Dendritic cell treated with granulocyte-macrophage colony-stimulating factor and Interleukin-4, amounts not matched to agents 40 ng/mL and 50 ng/mL, for 4 days (primary cell): ENCODE measurements at regions of chr5 and their contacts with region 1.

Region 1: DNA sequence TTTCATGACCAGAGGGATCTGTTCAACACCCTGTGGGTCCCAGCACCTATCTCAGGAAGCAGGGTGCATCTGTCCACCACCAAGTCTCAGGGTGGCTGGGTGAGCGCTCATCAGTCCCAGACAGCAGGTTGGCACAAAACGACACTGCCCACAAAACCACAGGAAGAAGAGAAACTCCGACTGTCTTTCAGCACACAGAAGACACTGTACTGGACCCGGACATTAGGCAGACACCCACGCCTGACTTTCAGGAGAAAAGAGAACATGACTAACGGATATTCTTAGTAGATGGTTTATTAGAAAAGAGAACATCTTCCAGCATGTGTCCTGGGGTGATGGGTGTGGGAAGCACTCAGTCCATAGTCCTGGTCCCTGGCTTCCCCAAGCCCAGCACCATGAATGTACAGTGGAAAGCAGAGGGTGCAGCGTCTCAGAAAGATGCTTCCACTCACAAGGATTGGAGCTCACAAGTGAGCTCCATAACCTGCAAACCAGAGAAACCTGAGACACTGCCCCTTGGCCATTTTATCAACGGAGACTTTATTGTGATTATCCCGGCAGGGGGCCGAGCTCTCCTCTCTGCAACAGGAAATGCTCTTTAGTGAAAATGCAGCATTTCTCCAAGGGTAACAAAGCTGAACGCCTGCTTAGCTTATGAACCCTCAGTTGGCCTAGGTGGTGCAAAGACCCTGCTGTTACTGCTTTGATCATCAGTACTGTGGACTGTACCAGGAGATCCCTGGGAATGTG is 35.8 kb upstream of the LCP2 start:
- H3K4me3 Mint-ChIP-seq: peak overlapping the region; percentile 44
- H3K27ac Mint-ChIP-seq: no peak overlapping the region
- H3K4me1 Mint-ChIP-seq: no peaks in the 10 kb centered on the region
- H3K27me3 Mint-ChIP-seq: peaks cover 2% of the 10 kb centered on the region

Region 2: GRCh38 chr5:170067152-170067551 is 266.2 kb before region 1 on chr5:
- intact Hi-C with region 1: no loop called
- H3K4me3 Mint-ChIP-seq: no peak overlapping the region
- H3K27ac Mint-ChIP-seq: no peak overlapping the region
- H3K4me1 Mint-ChIP-seq: no peaks in the 10 kb centered on the region
- H3K27me3 Mint-ChIP-seq: no peaks in the 10 kb centered on the region

Region 3: DNA sequence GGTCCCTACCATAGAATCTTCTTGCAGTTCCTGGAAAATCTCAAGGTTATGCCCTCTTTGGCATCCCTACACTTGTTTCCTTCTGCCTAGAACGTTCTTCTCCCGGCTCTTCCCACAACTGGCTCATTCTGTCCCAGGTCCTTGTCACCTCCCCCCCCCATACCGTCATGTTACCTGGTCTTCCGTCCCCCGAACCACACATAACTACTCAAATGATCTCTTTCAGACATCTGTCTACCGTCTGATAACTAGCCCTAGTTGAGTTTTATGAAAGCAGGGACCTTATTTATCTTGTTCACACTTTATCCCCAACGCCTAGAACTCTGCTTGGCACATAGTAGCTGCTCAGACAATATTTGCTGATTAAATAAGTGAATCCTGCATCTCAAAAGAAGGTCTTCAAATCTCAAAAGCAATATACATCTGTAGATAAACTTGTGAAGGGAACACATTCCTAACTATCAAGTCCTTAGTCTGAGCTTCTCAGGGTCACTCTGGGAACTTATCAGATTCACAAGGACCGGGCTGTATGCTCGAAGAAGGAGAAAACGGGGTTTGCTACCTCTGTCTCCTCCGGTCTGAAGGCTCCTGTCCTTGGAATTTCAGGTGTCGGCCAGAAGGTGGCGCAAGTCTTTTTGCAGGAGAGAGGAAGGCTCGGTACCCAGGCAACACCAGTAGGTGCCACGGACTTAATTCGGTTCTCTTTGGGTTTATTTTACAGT is 65.7 kb before region 1 on chr5:
- intact Hi-C with region 1: loop called (anchors 1 kb)
- H3K4me3 Mint-ChIP-seq: no peak overlapping the region
- H3K27ac Mint-ChIP-seq: peak overlapping the region; percentile 20
- H3K4me1 Mint-ChIP-seq: peaks cover 63% of the 10 kb centered on the region
- H3K27me3 Mint-ChIP-seq: no peaks in the 10 kb centered on the region

Region 4: DNA sequence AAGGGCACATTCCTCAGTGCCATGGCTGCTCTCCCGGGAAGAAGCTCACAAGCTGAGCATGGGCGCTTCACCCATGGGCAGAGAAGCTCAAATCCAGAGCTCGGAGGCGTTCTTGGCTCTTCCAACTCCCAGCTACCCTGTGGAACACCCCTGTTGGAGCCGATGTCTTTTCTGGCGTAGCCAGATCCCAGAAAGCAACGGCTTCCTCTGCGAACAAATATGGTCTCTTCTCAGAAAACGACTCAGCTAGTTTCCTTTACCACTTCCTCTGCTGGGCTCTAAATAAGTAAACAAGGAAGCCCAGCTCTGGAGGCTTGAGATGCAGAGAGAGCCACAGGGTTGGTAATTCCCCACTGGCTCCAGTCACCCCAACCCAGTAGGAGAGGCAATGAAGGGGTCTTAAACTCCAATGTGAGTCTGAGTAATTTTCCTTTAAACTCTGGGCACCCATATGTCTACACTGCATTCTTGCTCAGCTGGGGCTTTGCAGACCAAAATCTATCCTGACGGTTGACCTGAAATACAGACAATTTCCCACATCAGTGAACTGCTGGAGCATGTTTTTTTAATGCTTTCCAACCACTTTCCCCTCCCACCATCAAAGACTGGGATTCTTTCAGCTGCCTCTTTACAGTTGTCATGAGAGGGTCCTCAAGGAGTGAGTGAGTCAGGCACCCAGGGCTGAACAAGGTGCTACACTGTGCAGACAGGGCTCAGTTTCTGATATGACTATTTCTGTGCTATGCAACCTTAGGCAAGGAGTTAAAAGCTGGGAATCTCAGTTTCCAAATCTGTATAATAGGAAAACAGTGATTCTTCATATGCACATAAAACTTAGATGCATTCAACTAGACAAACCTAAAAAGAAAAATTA is 35.5 kb before region 1 on chr5 and contains the start of gene LCP2:
- intact Hi-C with region 1: loop called (anchors 5 kb)
- H3K4me3 Mint-ChIP-seq: peak within 1 kb of the TSS; percentile 99
- H3K27ac Mint-ChIP-seq: peak within 1 kb of the TSS; percentile 95
- H3K4me1 Mint-ChIP-seq: peaks cover 82% of the 10 kb centered on the region
- H3K27me3 Mint-ChIP-seq: no peaks in the 10 kb centered on the region

Region 5: GRCh38 chr5:170312666-170313065 is 20.7 kb before region 1 on chr5:
- intact Hi-C with region 1: loop called (anchors 1 kb)
- H3K4me3 Mint-ChIP-seq: peak overlapping the region; percentile 37
- H3K27ac Mint-ChIP-seq: peak overlapping the region; percentile 88
- H3K4me1 Mint-ChIP-seq: peaks cover 77% of the 10 kb centered on the region
- H3K27me3 Mint-ChIP-seq: peaks cover 1% of the 10 kb centered on the region

Region 6: DNA sequence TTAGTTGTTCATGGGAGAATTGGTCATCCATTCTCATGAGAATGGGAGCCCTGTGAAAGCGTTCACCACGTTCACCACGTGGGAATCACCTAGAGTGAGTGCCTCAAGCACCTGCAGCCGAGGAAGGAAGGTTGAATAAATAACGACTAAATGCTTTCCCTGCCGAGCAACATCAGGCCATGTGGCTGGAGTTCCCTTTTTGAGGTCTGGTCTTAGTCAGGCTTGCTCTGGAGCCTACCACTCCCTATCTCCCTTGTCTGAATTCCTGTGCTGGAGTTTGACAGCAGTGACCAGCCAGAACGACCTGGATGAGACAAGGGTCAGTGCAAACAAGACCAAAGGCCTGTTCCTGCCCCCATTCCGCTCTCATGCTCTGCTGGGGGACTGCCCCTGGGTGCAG is 27.4 kb after region 1 on chr5:
- intact Hi-C with region 1: loop called (anchors 2 kb)
- H3K4me3 Mint-ChIP-seq: no peak overlapping the region
- H3K27ac Mint-ChIP-seq: peak overlapping the region; percentile 98
- H3K4me1 Mint-ChIP-seq: peaks cover 88% of the 10 kb centered on the region
- H3K27me3 Mint-ChIP-seq: no peaks in the 10 kb centered on the region